ENCODE measurements at regions of chr3 and their contacts with region 1.

Region 1: DNA sequence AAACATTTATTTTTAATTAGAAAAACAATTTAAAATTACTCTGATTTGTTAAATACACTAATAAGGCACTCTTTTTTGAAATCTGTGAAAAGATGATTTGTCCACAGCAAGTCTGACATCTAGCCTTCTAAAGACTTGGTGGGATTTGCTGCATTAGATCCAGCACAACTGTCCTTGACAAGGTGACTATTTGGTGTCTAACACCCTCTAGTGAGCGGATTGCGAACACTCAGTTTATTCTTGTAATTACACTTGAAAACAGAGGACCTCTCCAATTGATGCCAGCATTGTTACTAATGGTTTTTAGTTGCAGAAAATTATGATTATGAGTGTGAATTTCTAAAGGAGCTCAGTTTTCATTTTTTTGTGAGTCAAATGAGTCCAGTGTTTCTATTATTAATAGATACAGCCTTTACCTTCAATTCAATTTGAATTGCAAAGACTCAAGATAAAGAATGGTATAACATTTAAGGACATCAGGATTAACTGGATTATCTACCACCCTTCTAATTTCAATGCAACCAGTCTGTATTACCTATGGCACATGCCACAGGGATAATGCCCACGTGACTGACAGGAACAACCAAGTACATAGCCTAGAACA is 29.7 kb upstream of the STRIT1 start:
- DNase-seq: peak in 2 of 9 experiments; percentile 5 to 44
- ATAC-seq: no peak
- H3K4me3 ChIP-seq: no peak overlapping the region
- H3K4me3 Mint-ChIP-seq: no peak overlapping the region
- H3K27ac ChIP-seq: no peak overlapping the region
- H3K27ac Mint-ChIP-seq: no peak overlapping the region
- H3K4me1 ChIP-seq: no peaks in the 10 kb centered on the region
- H3K4me1 Mint-ChIP-seq: no peaks in the 10 kb centered on the region
- H3K27me3 ChIP-seq: no peaks in the 10 kb centered on the region
- H3K27me3 Mint-ChIP-seq: no peaks in the 10 kb centered on the region
- CTCF ChIP-seq: no peak

Region 2: DNA sequence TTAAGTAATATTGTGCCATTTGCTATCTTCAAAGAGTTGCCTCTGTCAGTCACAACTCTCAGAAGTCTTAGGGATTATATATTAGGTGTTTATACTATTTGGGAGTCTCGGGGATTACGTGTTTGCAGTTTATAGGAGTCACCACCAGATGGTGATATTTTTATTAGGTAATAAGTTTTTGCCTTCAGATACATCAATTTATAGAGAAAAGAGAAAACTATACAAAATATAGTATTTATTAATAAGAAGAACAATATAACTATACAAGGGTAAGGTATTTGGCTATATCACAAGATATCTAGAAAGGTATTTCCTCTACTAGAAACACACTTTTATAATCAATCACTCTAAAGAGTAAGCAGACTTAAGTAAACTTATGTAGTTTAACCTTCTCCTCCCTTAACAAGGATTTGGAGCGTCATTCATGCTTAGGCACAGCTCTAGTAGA is 988.2 kb before region 1 on chr3:
- CTCF ChIA-PET with region 1: no interaction called
- POLR2A ChIA-PET with region 1: no interaction called
- intact Hi-C with region 1: loop called (anchors 5 to 10 kb)
- DNase-seq: peak in 2 of 9 experiments; percentile 46 to 60
- ATAC-seq: peak; percentile 54
- H3K4me3 ChIP-seq: no peak overlapping the region
- H3K4me3 Mint-ChIP-seq: no peak overlapping the region
- H3K27ac ChIP-seq: no peak overlapping the region
- H3K27ac Mint-ChIP-seq: no peak overlapping the region
- H3K4me1 ChIP-seq: no peaks in the 10 kb centered on the region
- H3K4me1 Mint-ChIP-seq: no peaks in the 10 kb centered on the region
- H3K27me3 ChIP-seq: no peaks in the 10 kb centered on the region
- H3K27me3 Mint-ChIP-seq: peaks cover 14% of the 10 kb centered on the region
- CTCF ChIP-seq: peak; percentile 57

Region 3: GRCh38 chr3:154904328-154904727 is 418.8 kb before region 1 on chr3:
- CTCF ChIA-PET with region 1: no interaction called
- POLR2A ChIA-PET with region 1: no interaction called
- intact Hi-C with region 1: loop called in 1 of 2 experiments (anchors 5 kb)
- DNase-seq: no peak
- ATAC-seq: no peak
- H3K4me3 ChIP-seq: no peak overlapping the region
- H3K4me3 Mint-ChIP-seq: no peak overlapping the region
- H3K27ac ChIP-seq: no peak overlapping the region
- H3K27ac Mint-ChIP-seq: no peak overlapping the region
- H3K4me1 ChIP-seq: no peaks in the 10 kb centered on the region
- H3K4me1 Mint-ChIP-seq: no peaks in the 10 kb centered on the region
- H3K27me3 ChIP-seq: no peaks in the 10 kb centered on the region
- H3K27me3 Mint-ChIP-seq: no peaks in the 10 kb centered on the region
- CTCF ChIP-seq: no peak

Region 4: DNA sequence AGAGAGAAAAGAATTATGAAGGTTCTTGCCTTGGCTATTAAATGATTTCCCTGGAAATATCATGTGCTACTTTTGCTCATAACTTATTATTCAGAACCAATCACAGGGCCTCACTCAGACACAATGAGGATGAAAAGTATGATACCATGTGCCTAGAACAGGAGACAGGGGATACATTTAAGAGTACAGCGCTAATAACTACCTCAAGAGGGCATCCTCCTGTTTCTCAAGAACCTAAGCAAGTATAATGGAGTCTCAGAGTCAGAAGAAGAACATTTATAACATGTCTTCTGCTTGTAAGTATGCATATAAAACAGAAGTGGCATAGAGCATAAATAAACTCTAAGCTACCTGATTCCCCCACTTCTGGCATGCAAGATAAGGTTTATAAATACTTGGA is 368.4 kb before region 1 on chr3:
- CTCF ChIA-PET with region 1: interaction called, 12 read pairs
- POLR2A ChIA-PET with region 1: no interaction called
- intact Hi-C with region 1: loop called in 1 of 2 experiments (anchors 5 kb)
- DNase-seq: peak in 1 of 9 experiments; percentile 19
- ATAC-seq: no peak
- H3K4me3 ChIP-seq: no peak overlapping the region
- H3K4me3 Mint-ChIP-seq: no peak overlapping the region
- H3K27ac ChIP-seq: no peak overlapping the region
- H3K27ac Mint-ChIP-seq: no peak overlapping the region
- H3K4me1 ChIP-seq: no peaks in the 10 kb centered on the region
- H3K4me1 Mint-ChIP-seq: no peaks in the 10 kb centered on the region
- H3K27me3 ChIP-seq: no peaks in the 10 kb centered on the region
- H3K27me3 Mint-ChIP-seq: no peaks in the 10 kb centered on the region
- CTCF ChIP-seq: no peak

Region 5: DNA sequence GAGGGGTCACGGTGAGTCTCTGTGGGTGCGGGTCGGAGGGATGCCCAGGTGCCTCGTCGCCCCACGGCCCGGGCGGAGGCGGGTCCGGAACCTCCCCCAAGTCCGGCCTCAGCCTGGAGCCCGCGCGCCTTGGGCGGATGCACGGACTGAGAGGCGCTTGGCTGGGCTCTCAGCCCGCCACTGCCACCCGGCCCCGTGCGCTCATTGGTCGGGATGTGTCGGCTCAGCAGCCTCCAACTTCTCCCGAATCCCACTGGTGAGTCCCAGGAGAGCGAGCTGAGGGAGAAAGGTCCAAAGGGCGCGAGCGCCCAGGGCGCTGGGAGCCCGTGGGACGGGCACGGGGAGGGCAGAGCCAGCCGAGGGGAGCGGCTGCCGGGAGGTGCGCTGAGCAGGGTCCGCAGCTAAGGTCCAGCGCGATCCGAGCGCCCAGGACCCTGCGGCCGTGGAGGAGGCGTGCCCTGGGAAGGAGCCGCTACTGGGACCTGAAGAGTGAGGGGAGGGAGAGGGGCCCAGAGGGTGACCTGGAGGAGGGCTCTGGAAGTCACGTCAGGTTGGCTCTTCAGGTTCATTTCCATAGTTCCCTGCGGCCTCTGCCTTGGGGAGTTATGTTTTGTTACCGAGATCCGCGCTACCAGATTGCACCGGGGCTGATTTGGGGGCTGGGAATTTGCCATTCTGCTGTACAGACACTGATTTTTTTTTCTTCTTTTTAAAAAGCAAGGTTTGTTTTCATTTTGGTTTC is 243.2 kb before region 1 on chr3 and contains the start of gene MME:
- CTCF ChIA-PET with region 1: no interaction called
- POLR2A ChIA-PET with region 1: no interaction called
- intact Hi-C with region 1: loop called in 1 of 2 experiments (anchors 10 kb)
- DNase-seq: no peak
- ATAC-seq: no peak
- H3K4me3 ChIP-seq: peak within 1 kb of the TSS in 1 of 2 experiments; percentile 9
- H3K4me3 Mint-ChIP-seq: peak within 1 kb of the TSS; percentile 66
- H3K27ac ChIP-seq: no peak within 1 kb of the TSS
- H3K27ac Mint-ChIP-seq: no peak within 1 kb of the TSS
- H3K4me1 ChIP-seq: peaks cover 8% of the 10 kb centered on the region
- H3K4me1 Mint-ChIP-seq: peaks cover 15% of the 10 kb centered on the region
- H3K27me3 ChIP-seq: peaks cover 0 to 10% of the 10 kb centered on the region in 2 experiments
- H3K27me3 Mint-ChIP-seq: peaks cover 31% of the 10 kb centered on the region
- CTCF ChIP-seq: no peak
- total RNA-seq, gene MME: 0.81 to 0.86 TPM

Measured in CD8-positive, alpha-beta T cell (primary cell).